ENCODE measurements at regions of chr14 and their contacts with region 1.

Region 1: GRCh38 chr14:90454041-90455000 is 57.5 kb downstream of the CALM1 start:
- DNase-seq: peak; percentile 95
- H3K4me3 ChIP-seq: peak overlapping the region in 1 of 3 experiments; percentile 12
- H3K27ac ChIP-seq: no peak overlapping the region
- H3K4me1 ChIP-seq: peaks cover 3% of the 10 kb centered on the region
- H3K27me3 ChIP-seq: peaks cover 0 to 1% of the 10 kb centered on the region in 2 experiments
- CTCF ChIP-seq: peak in 1 of 2 donors; percentile 4
- POLR2A ChIP-seq: peak; percentile 27

Region 2: GRCh38 chr14:90228478-90228877 is 225.8 kb before region 1 on chr14:
- CTCF ChIA-PET with region 1: no interaction called
- POLR2A ChIA-PET with region 1: no interaction called
- dilution Hi-C with region 1: no loop called
- intact Hi-C with region 1: no loop called
- DNase-seq: no peak
- H3K4me3 ChIP-seq: no peak overlapping the region
- H3K27ac ChIP-seq: no peak overlapping the region
- H3K4me1 ChIP-seq: no peaks in the 10 kb centered on the region
- H3K27me3 ChIP-seq: peaks cover 2 to 4% of the 10 kb centered on the region in 2 experiments
- CTCF ChIP-seq: no peak
- POLR2A ChIP-seq: no peak

Region 3: DNA sequence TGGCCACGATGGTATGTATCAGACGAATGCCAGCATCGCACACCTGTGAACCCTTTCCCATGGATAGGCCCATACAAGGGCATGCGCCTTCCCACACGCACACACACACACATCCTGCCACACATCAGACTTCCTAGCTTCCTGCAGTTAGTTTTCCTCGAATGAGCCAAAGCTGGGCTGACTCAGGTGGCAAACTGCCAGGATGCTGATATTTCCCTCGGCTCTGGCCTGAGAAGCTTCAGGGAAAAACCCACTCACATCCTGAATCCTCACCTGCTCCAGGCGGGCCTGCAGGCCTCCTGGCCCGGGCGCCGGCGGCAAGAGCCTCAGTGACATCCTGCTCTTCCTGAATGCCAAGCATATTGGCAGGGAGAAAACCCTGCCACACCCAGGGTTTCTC is 35.1 kb before region 1 on chr14:
- CTCF ChIA-PET with region 1: interaction called, 3 read pairs
- POLR2A ChIA-PET with region 1: no interaction called
- dilution Hi-C with region 1: no loop called
- intact Hi-C with region 1: loop called (anchors 1 kb)
- DNase-seq: peak; percentile 100
- H3K4me3 ChIP-seq: no peak overlapping the region
- H3K27ac ChIP-seq: peak overlapping the region; percentile 75
- H3K4me1 ChIP-seq: peaks cover 32% of the 10 kb centered on the region
- H3K27me3 ChIP-seq: no peaks in the 10 kb centered on the region
- CTCF ChIP-seq: no peak
- POLR2A ChIP-seq: no peak

Region 4: GRCh38 chr14:90624223-90624622 is 169.9 kb after region 1 on chr14:
- CTCF ChIA-PET with region 1: no interaction called
- POLR2A ChIA-PET with region 1: no interaction called
- dilution Hi-C with region 1: no loop called
- intact Hi-C with region 1: no loop called
- DNase-seq: peak; percentile 55
- H3K4me3 ChIP-seq: no peak overlapping the region
- H3K27ac ChIP-seq: peak overlapping the region; percentile 23
- H3K4me1 ChIP-seq: peaks cover 19% of the 10 kb centered on the region
- H3K27me3 ChIP-seq: no peaks in the 10 kb centered on the region
- CTCF ChIP-seq: no peak
- POLR2A ChIP-seq: no peak